ENCODE measurements at regions of chr14 and their contacts with region 1.

Region 1: GRCh38 chr14:102591889-102592763 is at the start of gene RCOR1:
- DNase-seq: peak; percentile 99
- H3K4me3 Mint-ChIP-seq: peak within 1 kb of the TSS; percentile 84
- H3K27ac Mint-ChIP-seq: peak within 1 kb of the TSS; percentile 93
- H3K4me1 Mint-ChIP-seq: peaks cover 32% of the 10 kb centered on the region
- H3K27me3 Mint-ChIP-seq: no peaks in the 10 kb centered on the region
- total RNA-seq, gene RCOR1: 14.1 to 14.3 TPM

Region 2: GRCh38 chr14:102139248-102140026 is 452.7 kb before region 1 on chr14 and contains the start of gene WDR20:
- CTCF ChIA-PET with region 1: no interaction called
- POLR2A ChIA-PET with region 1: no interaction called
- intact Hi-C with region 1: loop called (anchors 1 kb)
- DNase-seq: peak; percentile 100
- H3K4me3 Mint-ChIP-seq: peak within 1 kb of the TSS; percentile 98
- H3K27ac Mint-ChIP-seq: peak within 1 kb of the TSS; percentile 94
- H3K4me1 Mint-ChIP-seq: peaks cover 20% of the 10 kb centered on the region
- H3K27me3 Mint-ChIP-seq: no peaks in the 10 kb centered on the region
- total RNA-seq, gene WDR20: 22.2 to 25.3 TPM

Region 3: GRCh38 chr14:102524466-102525218 is 67.5 kb before region 1 on chr14:
- CTCF ChIA-PET with region 1: interaction called, 20 read pairs
- POLR2A ChIA-PET with region 1: interaction called, 3 read pairs
- intact Hi-C with region 1: loop called (anchors 1 kb)
- DNase-seq: peak; percentile 98
- H3K4me3 Mint-ChIP-seq: peak overlapping the region; percentile 68
- H3K27ac Mint-ChIP-seq: peak overlapping the region; percentile 26
- H3K4me1 Mint-ChIP-seq: peaks cover 28% of the 10 kb centered on the region
- H3K27me3 Mint-ChIP-seq: no peaks in the 10 kb centered on the region

Region 4: GRCh38 chr14:102608064-102608446 is 15.9 kb after region 1 on chr14:
- CTCF ChIA-PET with region 1: interaction called, 23 read pairs
- POLR2A ChIA-PET with region 1: interaction called, 4 read pairs
- intact Hi-C with region 1: loop called (anchors 1 kb)
- DNase-seq: no peak
- H3K4me3 Mint-ChIP-seq: no peak overlapping the region
- H3K27ac Mint-ChIP-seq: peak overlapping the region; percentile 23
- H3K4me1 Mint-ChIP-seq: peaks cover 47% of the 10 kb centered on the region
- H3K27me3 Mint-ChIP-seq: no peaks in the 10 kb centered on the region

Region 5: DNA sequence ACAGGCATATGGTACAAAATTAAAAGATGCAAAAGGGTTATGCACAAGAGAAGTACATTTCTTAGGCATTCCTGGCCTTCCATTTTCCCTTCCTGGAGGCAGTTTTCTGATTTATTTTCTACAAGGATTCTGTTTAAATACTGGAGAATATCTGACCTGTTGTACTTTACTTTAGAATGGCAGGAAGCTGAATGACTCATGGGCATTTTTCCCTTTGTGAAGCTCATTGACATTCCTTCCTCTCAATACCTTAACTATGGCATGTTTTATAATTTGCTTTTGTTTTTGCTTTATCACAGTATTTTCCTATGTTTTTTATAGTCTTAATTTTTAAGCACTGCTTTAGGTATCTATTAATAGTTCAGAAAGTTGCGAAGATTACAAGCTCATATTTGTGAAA is 63.0 kb after region 1 on chr14:
- CTCF ChIA-PET with region 1: interaction called, 19 read pairs
- POLR2A ChIA-PET with region 1: no interaction called
- intact Hi-C with region 1: loop called (anchors 2 kb)
- DNase-seq: no peak
- H3K4me3 Mint-ChIP-seq: no peak overlapping the region
- H3K27ac Mint-ChIP-seq: no peak overlapping the region
- H3K4me1 Mint-ChIP-seq: peaks cover 20% of the 10 kb centered on the region
- H3K27me3 Mint-ChIP-seq: no peaks in the 10 kb centered on the region

Region 6: DNA sequence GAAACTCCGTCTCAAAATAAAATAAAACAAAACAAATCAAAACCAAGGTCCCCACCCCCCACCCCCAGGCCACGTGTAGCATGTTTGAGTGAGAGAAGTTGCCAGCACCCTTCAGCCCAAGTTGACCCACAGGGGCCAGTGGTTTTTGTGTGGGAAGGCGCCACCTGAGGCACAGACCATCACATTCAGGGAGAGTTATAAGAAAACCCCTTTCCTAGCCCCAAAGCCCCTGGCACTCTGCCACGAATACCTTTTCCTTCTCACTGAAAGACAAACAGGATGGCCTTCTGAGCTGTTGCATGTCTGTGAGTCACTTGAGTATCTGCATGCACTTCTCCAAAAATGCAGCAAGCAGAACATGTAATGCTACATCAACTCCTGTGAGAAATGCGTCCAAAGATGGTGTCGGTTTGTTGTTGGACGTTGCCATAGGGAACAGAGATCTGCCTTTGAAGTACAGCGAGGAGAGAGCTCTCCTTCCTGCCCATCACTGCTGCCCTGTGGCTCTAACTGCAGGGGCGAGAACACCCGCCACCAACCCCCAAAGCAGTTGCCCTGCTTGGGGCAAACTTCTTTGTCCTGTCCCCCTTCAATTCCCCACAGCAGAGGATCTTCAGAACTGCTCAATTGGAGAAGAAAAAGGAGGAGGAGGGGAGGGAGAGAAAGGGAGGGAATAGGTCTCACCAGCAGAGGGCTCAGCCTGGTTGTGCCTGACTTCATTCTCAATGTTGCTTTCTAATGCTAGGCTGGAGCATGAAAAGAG is 182.4 kb after region 1 on chr14:
- CTCF ChIA-PET with region 1: interaction called, 3 read pairs
- POLR2A ChIA-PET with region 1: no interaction called
- intact Hi-C with region 1: loop called (anchors 10 kb)
- DNase-seq: peak; percentile 74
- H3K4me3 Mint-ChIP-seq: peak overlapping the region; percentile 9
- H3K27ac Mint-ChIP-seq: peak overlapping the region; percentile 86
- H3K4me1 Mint-ChIP-seq: peaks cover 35% of the 10 kb centered on the region
- H3K27me3 Mint-ChIP-seq: no peaks in the 10 kb centered on the region